ENCODE measurements at regions of chr4 and their contacts with region 1.

Region 1: DNA sequence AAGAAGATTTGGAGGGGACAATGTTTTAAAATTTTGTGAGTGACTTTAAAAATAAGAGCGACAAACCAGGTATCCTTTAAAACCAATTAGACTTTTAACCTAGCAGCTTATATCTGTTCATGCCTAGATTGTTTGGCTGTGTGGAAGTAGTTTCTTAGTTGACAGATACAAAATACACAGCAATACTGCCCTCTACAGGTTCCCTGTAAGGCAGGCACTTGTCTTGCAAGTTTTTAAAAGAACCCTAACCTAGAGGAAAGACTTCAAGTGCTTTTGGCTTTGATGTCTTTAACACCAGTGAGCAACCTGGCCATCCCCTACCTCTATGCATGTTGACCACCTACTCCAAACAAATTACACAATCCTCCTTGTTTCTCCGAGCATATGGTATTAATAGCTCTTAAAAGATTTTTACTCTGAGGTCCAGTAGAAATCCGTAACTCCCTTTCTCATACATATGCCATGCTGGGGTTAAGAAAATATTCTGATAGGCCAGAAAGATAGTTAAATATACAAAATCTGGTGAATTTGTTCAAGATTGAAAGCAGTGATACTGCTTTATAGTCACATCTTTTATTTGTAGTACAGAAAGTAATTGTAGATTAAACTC is 273.0 kb downstream of the ARHGAP24 start:
- DNase-seq: peak; percentile 85
- ATAC-seq: peak; percentile 78
- H3K4me3 ChIP-seq: no peak overlapping the region
- H3K4me3 Mint-ChIP-seq: no peak overlapping the region
- H3K27ac ChIP-seq: no peak overlapping the region
- H3K27ac Mint-ChIP-seq: peak overlapping the region; percentile 47
- H3K4me1 ChIP-seq: peaks cover 50 to 63% of the 10 kb centered on the region in 2 donors
- H3K4me1 Mint-ChIP-seq: peaks cover 56% of the 10 kb centered on the region
- H3K27me3 ChIP-seq: no peaks in the 10 kb centered on the region
- H3K27me3 Mint-ChIP-seq: no peaks in the 10 kb centered on the region
- CTCF ChIP-seq: peak; percentile 92

Region 2: DNA sequence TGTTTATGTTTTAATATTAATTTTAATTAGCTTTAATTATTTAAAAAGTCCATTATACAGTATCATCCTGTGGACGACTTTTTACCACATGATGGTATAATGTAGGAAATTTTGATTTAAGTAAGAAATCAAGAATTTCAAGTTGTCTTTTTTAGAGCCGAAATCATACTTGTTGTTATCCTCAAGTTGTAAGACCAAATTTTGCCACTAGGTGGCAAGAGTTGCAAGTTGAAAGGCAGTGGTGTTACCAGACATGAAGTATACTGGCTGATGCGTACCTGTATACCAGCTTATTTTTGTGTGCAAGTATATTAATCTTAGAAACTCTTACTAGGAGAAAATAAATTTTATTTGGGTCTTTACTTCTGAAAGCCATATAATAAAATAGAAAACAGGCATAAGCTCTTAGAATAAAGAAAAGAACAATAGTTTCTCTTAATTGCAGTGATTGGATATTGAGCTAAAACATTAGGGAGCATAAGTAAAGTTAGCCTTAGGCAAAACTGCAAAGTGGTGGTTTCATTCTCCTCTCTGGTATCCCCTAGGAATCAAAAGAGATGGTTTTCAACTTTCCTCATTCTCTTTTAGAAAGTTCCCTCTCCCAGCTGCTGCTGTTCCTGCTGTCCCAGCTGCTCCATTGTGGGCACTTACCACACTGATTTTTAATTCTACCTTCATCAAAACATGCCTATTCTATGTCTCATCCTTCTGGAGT is 663.5 kb before region 1 on chr4:
- CTCF ChIA-PET with region 1: interaction called, 5 read pairs
- POLR2A ChIA-PET with region 1: no interaction called
- intact Hi-C with region 1: loop called (anchors 5 kb)
- DNase-seq: peak; percentile 74
- ATAC-seq: peak; percentile 60
- H3K4me3 ChIP-seq: no peak overlapping the region
- H3K4me3 Mint-ChIP-seq: no peak overlapping the region
- H3K27ac ChIP-seq: no peak overlapping the region
- H3K27ac Mint-ChIP-seq: no peak overlapping the region
- H3K4me1 ChIP-seq: no peaks in the 10 kb centered on the region
- H3K4me1 Mint-ChIP-seq: peaks cover 6% of the 10 kb centered on the region
- H3K27me3 ChIP-seq: peaks cover 0 to 6% (median 5%) of the 10 kb centered on the region in 4 experiments
- H3K27me3 Mint-ChIP-seq: peaks cover 8% of the 10 kb centered on the region
- CTCF ChIP-seq: peak; percentile 89

Region 3: DNA sequence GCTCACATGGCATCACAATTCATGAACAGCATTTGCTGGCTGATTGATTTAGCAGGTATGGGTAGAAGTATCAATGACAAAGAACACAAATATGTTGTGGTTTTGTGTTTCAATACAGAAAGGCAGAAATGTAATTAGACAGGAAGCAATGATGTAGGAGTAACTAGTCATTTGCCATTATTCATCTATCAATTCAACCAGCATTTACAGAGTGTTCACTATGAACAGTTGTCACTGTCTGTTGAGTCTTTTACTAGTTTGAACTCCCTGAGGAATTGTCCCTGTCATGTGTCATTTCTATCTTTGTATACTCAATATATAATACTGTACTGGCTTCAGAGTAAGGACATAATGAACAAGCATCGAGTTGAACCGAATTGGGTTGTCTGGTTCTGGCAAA is 324.6 kb before region 1 on chr4:
- CTCF ChIA-PET with region 1: interaction called, 9 read pairs
- POLR2A ChIA-PET with region 1: no interaction called
- intact Hi-C with region 1: loop called (anchors 1 kb)
- DNase-seq: no peak
- ATAC-seq: no peak
- H3K4me3 ChIP-seq: no peak overlapping the region
- H3K4me3 Mint-ChIP-seq: no peak overlapping the region
- H3K27ac ChIP-seq: no peak overlapping the region
- H3K27ac Mint-ChIP-seq: no peak overlapping the region
- H3K4me1 ChIP-seq: peaks cover 6 to 8% of the 10 kb centered on the region in 2 donors
- H3K4me1 Mint-ChIP-seq: peaks cover 22% of the 10 kb centered on the region
- H3K27me3 ChIP-seq: no peaks in the 10 kb centered on the region
- H3K27me3 Mint-ChIP-seq: no peaks in the 10 kb centered on the region
- CTCF ChIP-seq: no peak

Region 4: DNA sequence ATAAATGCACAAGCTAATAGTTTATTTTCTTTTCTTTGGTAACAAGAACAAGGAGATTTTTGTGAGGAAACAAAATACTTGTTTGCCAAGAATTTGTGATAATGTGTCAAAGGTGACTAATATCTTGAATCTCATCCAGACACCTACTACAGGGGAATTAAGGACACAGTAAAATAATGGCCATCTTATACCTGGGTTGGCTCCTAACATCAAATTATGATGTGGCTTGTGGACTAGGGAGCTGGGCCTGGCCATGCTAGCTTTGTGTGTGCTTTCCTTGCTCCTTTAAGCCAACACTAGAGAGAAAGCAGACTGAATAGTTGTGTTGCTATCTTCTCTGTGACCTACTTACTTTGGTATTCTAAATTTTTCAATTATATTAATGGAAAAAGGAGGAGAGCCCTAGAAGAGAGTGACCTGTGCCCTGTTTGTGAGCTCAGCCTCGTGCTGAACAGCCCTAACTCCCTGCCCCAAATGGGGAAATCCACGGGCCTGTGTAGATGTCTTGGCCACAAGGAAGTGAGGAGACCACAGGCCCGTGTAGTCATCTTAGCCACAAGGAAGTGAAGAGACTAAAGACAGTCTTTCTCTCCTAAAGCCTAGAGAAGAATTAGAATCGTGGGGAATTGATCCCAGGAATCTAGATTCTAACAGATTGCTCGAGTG is 249.8 kb before region 1 on chr4:
- CTCF ChIA-PET with region 1: interaction called, 14 read pairs
- POLR2A ChIA-PET with region 1: no interaction called
- intact Hi-C with region 1: no loop called
- DNase-seq: peak; percentile 82
- ATAC-seq: peak; percentile 97
- H3K4me3 ChIP-seq: peak overlapping the region in 1 of 5 experiments; percentile 34
- H3K4me3 Mint-ChIP-seq: peak overlapping the region; percentile 66
- H3K27ac ChIP-seq: peak overlapping the region; percentile 67 to 91
- H3K27ac Mint-ChIP-seq: peak overlapping the region; percentile 89
- H3K4me1 ChIP-seq: peaks cover 36 to 45% of the 10 kb centered on the region in 2 donors
- H3K4me1 Mint-ChIP-seq: peaks cover 63% of the 10 kb centered on the region
- H3K27me3 ChIP-seq: no peaks in the 10 kb centered on the region
- H3K27me3 Mint-ChIP-seq: no peaks in the 10 kb centered on the region
- CTCF ChIP-seq: no peak

Region 5: GRCh38 chr4:85603437-85604336 is 144.3 kb before region 1 on chr4:
- CTCF ChIA-PET with region 1: interaction called, 6 read pairs
- POLR2A ChIA-PET with region 1: no interaction called
- intact Hi-C with region 1: loop called (anchors 5 kb)
- DNase-seq: peak; percentile 72
- ATAC-seq: peak; percentile 42
- H3K4me3 ChIP-seq: peak overlapping the region in 1 of 5 experiments; percentile 6
- H3K4me3 Mint-ChIP-seq: peak overlapping the region; percentile 62
- H3K27ac ChIP-seq: peak overlapping the region; percentile 60 to 91
- H3K27ac Mint-ChIP-seq: peak overlapping the region; percentile 86
- H3K4me1 ChIP-seq: peaks cover 45 to 46% of the 10 kb centered on the region in 2 donors
- H3K4me1 Mint-ChIP-seq: peaks cover 40% of the 10 kb centered on the region
- H3K27me3 ChIP-seq: no peaks in the 10 kb centered on the region
- H3K27me3 Mint-ChIP-seq: no peaks in the 10 kb centered on the region
- CTCF ChIP-seq: no peak

Region 6: GRCh38 chr4:85681221-85681657 is 66.7 kb before region 1 on chr4:
- CTCF ChIA-PET with region 1: interaction called, 4 read pairs
- POLR2A ChIA-PET with region 1: no interaction called
- intact Hi-C with region 1: loop called (anchors 5 kb)
- DNase-seq: peak; percentile 66
- ATAC-seq: peak; percentile 70
- H3K4me3 ChIP-seq: no peak overlapping the region
- H3K4me3 Mint-ChIP-seq: peak overlapping the region; percentile 57
- H3K27ac ChIP-seq: peak overlapping the region; percentile 69 to 84
- H3K27ac Mint-ChIP-seq: peak overlapping the region; percentile 86
- H3K4me1 ChIP-seq: peaks cover 45 to 50% of the 10 kb centered on the region in 2 donors
- H3K4me1 Mint-ChIP-seq: peaks cover 56% of the 10 kb centered on the region
- H3K27me3 ChIP-seq: no peaks in the 10 kb centered on the region
- H3K27me3 Mint-ChIP-seq: no peaks in the 10 kb centered on the region
- CTCF ChIP-seq: no peak

Region 7: GRCh38 chr4:85778632-85779131 is 30.7 kb after region 1 on chr4:
- CTCF ChIA-PET with region 1: interaction called, 12 read pairs
- POLR2A ChIA-PET with region 1: no interaction called
- intact Hi-C with region 1: no loop called
- DNase-seq: no peak
- ATAC-seq: peak; percentile 56
- H3K4me3 ChIP-seq: peak overlapping the region; percentile 2 to 68 (median 45)
- H3K4me3 Mint-ChIP-seq: peak overlapping the region; percentile 89
- H3K27ac ChIP-seq: peak overlapping the region; percentile 67 to 79
- H3K27ac Mint-ChIP-seq: peak overlapping the region; percentile 93
- H3K4me1 ChIP-seq: peaks cover 33 to 55% of the 10 kb centered on the region in 2 donors
- H3K4me1 Mint-ChIP-seq: peaks cover 66% of the 10 kb centered on the region
- H3K27me3 ChIP-seq: no peaks in the 10 kb centered on the region
- H3K27me3 Mint-ChIP-seq: no peaks in the 10 kb centered on the region
- CTCF ChIP-seq: no peak

Measured in B cell (primary cell).